Heart right ventricle (tissue), 16 donors: ENCODE measurements at regions of chr2 and their contacts with region 1.

Region 1: GRCh38 chr2:55268907-55269644 is at the start of gene MTIF2:
- DNase-seq: peak; percentile 95 to 96
- ATAC-seq: peak; percentile 99 to 100 (median 99)
- H3K4me3 ChIP-seq: peak within 1 kb of the TSS; percentile 53 to 94 (median 70)
- H3K27ac ChIP-seq: peak within 1 kb of the TSS; percentile 75 to 93 (median 88)
- H3K4me1 ChIP-seq: peaks cover 3 to 18% (median 15%) of the 10 kb centered on the region in 9 donors
- H3K27me3 ChIP-seq: no peaks in the 10 kb centered on the region
- CTCF ChIP-seq: peak in 4 of 9 donors; percentile 24 to 36 (median 30)
- total RNA-seq, gene MTIF2: 39.7 to 59.3 (median 50.0) TPM

Region 2: GRCh38 chr2:55232084-55232862 is 36.8 kb before region 1 on chr2 and contains the starts of genes CLHC1 and RPS27A:
- intact Hi-C with region 1: loop called in 2 of 10 experiments (anchors 5 kb)
- DNase-seq: peak; percentile 93 to 94
- ATAC-seq: peak; percentile 93 to 98 (median 96)
- H3K4me3 ChIP-seq: peak within 1 kb of the TSS; percentile 62 to 98 (median 88)
- H3K27ac ChIP-seq: peak within 1 kb of the TSS; percentile 80 to 98 (median 94)
- H3K4me1 ChIP-seq: peaks cover 0 to 49% (median 43%) of the 10 kb centered on the region in 9 donors
- H3K27me3 ChIP-seq: no peaks in the 10 kb centered on the region
- CTCF ChIP-seq: peak in 1 of 9 donors; percentile 2
- total RNA-seq, gene CLHC1: 4.0 to 9.0 (median 6.3) TPM
- total RNA-seq, gene RPS27A: 365 to 520 (median 408) TPM

Region 3: GRCh38 chr2:55282110-55282917 is 13.2 kb after region 1 on chr2:
- intact Hi-C with region 1: no loop called
- DNase-seq: peak; percentile 88 to 94
- ATAC-seq: peak; percentile 97 to 100 (median 98)
- H3K4me3 ChIP-seq: peak overlapping the region; percentile 30 to 96 (median 77)
- H3K27ac ChIP-seq: peak overlapping the region; percentile 87 to 98 (median 94)
- H3K4me1 ChIP-seq: peaks cover 0 to 32% (median 20%) of the 10 kb centered on the region in 9 donors
- H3K27me3 ChIP-seq: peaks cover 0 to 9% (median 0%) of the 10 kb centered on the region in 7 donors
- CTCF ChIP-seq: no peak

Region 4: DNA sequence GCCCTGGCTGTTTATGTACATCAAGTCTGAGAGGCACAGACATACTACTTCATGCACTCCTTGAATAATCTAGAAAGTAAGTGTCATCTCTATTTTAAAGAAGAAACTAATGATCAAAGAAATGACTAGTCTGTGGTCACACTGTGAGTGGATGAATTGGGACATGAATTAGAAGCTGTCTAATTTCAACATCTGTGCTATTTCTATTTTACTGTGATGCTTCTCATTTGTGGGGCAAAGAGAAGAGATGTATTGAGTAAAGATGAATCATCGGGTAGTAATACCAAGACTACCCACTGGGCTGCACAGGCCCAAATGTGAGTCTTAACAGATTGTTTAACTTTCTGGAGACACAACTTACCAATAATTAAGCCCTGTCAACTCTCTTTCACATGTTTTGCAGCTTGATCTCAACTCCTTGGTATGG is 42.4 kb after region 1 on chr2:
- intact Hi-C with region 1: no loop called
- DNase-seq: no peak
- ATAC-seq: no peak
- H3K4me3 ChIP-seq: no peak overlapping the region
- H3K27ac ChIP-seq: no peak overlapping the region
- H3K4me1 ChIP-seq: peaks cover 0 to 9% (median 0%) of the 10 kb centered on the region in 9 donors
- H3K27me3 ChIP-seq: no peaks in the 10 kb centered on the region
- CTCF ChIP-seq: no peak